ENCODE measurements at regions of chr22 and their contacts with region 1.

Region 1: DNA sequence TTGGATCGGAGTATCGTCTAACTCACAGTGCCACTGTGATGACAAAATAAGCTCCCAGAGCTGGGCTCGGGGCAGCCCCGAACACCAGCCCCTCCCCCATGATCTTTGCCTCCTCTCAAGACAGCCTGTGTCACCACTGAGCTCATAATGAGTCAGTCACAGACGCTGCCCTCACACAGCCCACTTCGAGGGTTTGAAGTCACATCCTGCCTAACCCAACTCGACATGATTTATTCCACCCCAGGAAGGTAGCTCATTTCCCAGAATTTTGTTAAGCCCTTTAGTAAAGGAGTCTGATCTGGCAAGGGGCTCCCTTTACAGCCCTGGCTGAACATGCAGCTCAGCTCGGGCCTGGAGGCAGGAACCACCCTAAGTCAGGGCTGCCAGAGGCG is 22.8 kb downstream of the MYH9 start:
- DNase-seq: peak; percentile 83 to 95 (median 87)
- H3K4me3 ChIP-seq: no peak overlapping the region
- H3K4me3 Mint-ChIP-seq: peak overlapping the region; percentile 39 to 84 (median 77)
- H3K27ac ChIP-seq: peak overlapping the region; percentile 73
- H3K27ac Mint-ChIP-seq: peak overlapping the region; percentile 93 to 99 (median 94)
- H3K4me1 ChIP-seq: peaks cover 98% of the 10 kb centered on the region
- H3K4me1 Mint-ChIP-seq: peaks cover 93 to 100% (median 99%) of the 10 kb centered on the region in 3 donors
- H3K27me3 ChIP-seq: no peaks in the 10 kb centered on the region
- H3K27me3 Mint-ChIP-seq: peaks cover 0 to 6% of the 10 kb centered on the region in 2 donors

Region 2: GRCh38 chr22:36339171-36340065 is 25.6 kb before region 1 on chr22:
- CTCF ChIA-PET with region 1: interaction called, 22 read pairs
- POLR2A ChIA-PET with region 1: interaction called, 11 read pairs
- DNase-seq: peak in 1 of 5 donors; percentile 47
- H3K4me3 ChIP-seq: no peak overlapping the region
- H3K4me3 Mint-ChIP-seq: peak overlapping the region; percentile 40 to 67 (median 65)
- H3K27ac ChIP-seq: no peak overlapping the region
- H3K27ac Mint-ChIP-seq: peak overlapping the region; percentile 90 to 99 (median 93)
- H3K4me1 ChIP-seq: peaks cover 98% of the 10 kb centered on the region
- H3K4me1 Mint-ChIP-seq: peaks cover 83 to 97% (median 95%) of the 10 kb centered on the region in 3 donors
- H3K27me3 ChIP-seq: no peaks in the 10 kb centered on the region
- H3K27me3 Mint-ChIP-seq: peaks cover 0 to 2% of the 10 kb centered on the region in 2 donors

Region 3: DNA sequence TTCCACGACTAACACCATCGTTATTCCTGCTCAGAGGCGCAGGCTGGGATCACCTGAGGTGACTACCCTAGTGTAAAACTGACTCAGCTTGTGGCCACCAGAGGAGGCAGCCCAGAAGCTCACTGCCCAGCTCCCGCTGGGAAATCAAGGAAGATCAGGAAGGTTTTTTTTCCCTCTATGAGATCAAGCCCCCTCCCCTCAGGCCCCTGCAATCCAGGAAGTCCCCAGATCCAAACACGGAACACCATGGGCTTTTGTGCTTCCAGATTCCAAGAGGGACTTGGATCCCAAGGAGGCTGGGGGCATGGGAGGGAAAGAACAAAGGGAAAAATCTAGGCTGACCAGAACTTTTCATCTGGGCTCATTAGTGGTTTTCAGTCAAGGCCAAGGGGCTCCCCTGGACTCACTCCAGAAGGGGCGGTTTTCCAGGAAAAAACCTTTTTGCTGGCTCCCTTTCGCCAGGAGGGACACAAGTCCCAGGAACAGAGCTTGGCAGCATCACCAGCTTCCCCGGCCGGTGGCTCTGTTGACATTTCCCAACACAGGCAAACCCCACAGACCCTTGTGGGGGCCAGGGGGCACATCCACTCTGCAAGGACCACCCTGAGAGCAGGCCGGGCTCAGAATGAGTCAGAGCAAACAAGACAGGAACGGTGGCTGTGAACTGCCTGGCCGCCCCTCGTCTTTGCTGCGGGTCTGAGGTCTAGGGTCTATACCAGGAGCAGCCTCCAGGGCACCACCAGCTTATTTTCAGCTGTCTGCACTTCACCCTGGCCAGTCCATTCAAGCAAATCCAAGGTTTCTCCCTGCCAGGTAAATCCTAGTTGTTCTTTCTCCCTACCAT is 14.0 kb before region 1 on chr22:
- CTCF ChIA-PET with region 1: interaction called, 8 read pairs
- POLR2A ChIA-PET with region 1: interaction called, 19 read pairs
- DNase-seq: no peak
- H3K4me3 ChIP-seq: no peak overlapping the region
- H3K4me3 Mint-ChIP-seq: peak overlapping the region; percentile 53 to 91 (median 72)
- H3K27ac ChIP-seq: no peak overlapping the region
- H3K27ac Mint-ChIP-seq: peak overlapping the region; percentile 87 to 99 (median 95)
- H3K4me1 ChIP-seq: peaks cover 92% of the 10 kb centered on the region
- H3K4me1 Mint-ChIP-seq: peaks cover 85 to 95% (median 91%) of the 10 kb centered on the region in 3 donors
- H3K27me3 ChIP-seq: no peaks in the 10 kb centered on the region
- H3K27me3 Mint-ChIP-seq: peaks cover 0 to 10% of the 10 kb centered on the region in 2 donors

Region 4: GRCh38 chr22:36379593-36380361 is 14.8 kb after region 1 on chr22:
- CTCF ChIA-PET with region 1: interaction called, 32 read pairs
- POLR2A ChIA-PET with region 1: interaction called, 40 read pairs
- DNase-seq: peak; percentile 42 to 81 (median 64)
- H3K4me3 ChIP-seq: peak overlapping the region; percentile 52
- H3K4me3 Mint-ChIP-seq: peak overlapping the region; percentile 61 to 88 (median 84)
- H3K27ac ChIP-seq: peak overlapping the region; percentile 48
- H3K27ac Mint-ChIP-seq: peak overlapping the region; percentile 89 to 99 (median 98)
- H3K4me1 ChIP-seq: peaks cover 96% of the 10 kb centered on the region
- H3K4me1 Mint-ChIP-seq: peaks cover 84 to 94% (median 91%) of the 10 kb centered on the region in 3 donors
- H3K27me3 ChIP-seq: no peaks in the 10 kb centered on the region
- H3K27me3 Mint-ChIP-seq: no peaks in the 10 kb centered on the region

Region 5: DNA sequence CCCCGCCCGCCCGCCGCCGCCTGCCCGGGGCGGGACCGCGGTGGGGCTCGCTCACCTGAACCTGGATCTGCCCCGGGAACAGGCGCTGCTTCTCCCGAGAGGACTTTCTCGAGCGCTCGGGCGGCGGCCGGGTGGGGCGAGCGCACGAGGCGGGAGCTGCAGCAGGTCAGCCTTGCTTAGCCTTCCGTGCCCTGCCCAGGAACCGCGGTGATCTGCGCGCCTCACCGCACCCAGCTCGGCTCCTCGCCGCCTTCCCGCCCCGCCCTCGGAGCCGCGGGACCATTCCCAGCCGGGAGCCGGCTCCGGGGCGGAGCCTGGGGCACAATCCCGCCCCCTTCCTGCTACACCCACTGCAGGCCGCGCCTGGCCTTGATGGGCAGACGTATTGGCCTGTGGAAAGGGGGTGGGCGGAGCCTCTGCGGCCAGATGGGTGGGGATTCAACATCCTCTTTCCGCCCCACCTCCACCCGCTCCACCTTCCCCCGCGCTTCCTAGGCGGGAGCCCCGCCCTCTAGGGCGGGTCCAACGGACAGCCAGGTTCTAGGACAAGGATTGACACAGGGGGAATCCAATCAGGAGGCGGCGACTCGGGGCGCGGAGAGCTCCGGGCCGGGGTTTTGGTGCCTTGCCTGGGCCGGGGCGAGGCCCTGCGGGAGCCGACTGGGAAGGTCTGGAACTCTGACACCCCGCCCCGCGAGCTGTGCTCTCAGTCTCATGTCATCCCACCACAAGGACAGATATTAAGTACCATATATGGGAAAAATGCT is 22.9 kb after region 1 on chr22 and contains the start of gene MYH9:
- CTCF ChIA-PET with region 1: interaction called, 17 read pairs
- POLR2A ChIA-PET with region 1: interaction called, 31 read pairs
- DNase-seq: peak; percentile 97 to 99 (median 99)
- H3K4me3 ChIP-seq: peak within 1 kb of the TSS; percentile 82
- H3K4me3 Mint-ChIP-seq: peak within 1 kb of the TSS; percentile 85 to 99 (median 90)
- H3K27ac ChIP-seq: peak within 1 kb of the TSS; percentile 64
- H3K27ac Mint-ChIP-seq: peak within 1 kb of the TSS; percentile 73 to 99 (median 93)
- H3K4me1 ChIP-seq: peaks cover 33% of the 10 kb centered on the region
- H3K4me1 Mint-ChIP-seq: peaks cover 34 to 43% (median 38%) of the 10 kb centered on the region in 3 donors
- H3K27me3 ChIP-seq: no peaks in the 10 kb centered on the region
- H3K27me3 Mint-ChIP-seq: peaks cover 0 to 1% of the 10 kb centered on the region in 2 donors
- total RNA-seq, gene MYH9: 680 to 684 TPM

Region 6: GRCh38 chr22:36470162-36470993 is 105.4 kb after region 1 on chr22:
- CTCF ChIA-PET with region 1: interaction called, 10 read pairs
- POLR2A ChIA-PET with region 1: no interaction called
- DNase-seq: peak; percentile 72 to 90 (median 83)
- H3K4me3 ChIP-seq: no peak overlapping the region
- H3K4me3 Mint-ChIP-seq: no peak overlapping the region
- H3K27ac ChIP-seq: no peak overlapping the region
- H3K27ac Mint-ChIP-seq: peak overlapping the region in 7 of 8 donors; percentile 35 to 80 (median 75)
- H3K4me1 ChIP-seq: peaks cover 21% of the 10 kb centered on the region
- H3K4me1 Mint-ChIP-seq: peaks cover 13 to 23% (median 14%) of the 10 kb centered on the region in 3 donors
- H3K27me3 ChIP-seq: no peaks in the 10 kb centered on the region
- H3K27me3 Mint-ChIP-seq: no peaks in the 10 kb centered on the region

Measured in CD8-positive, alpha-beta memory T cell (primary cell).